ENCODE measurements at regions of chr11 and their contacts with region 1.

Region 1: GRCh38 chr11:7986768-7987559 is at the start of gene EIF3F:
- DNase-seq: peak; percentile 94
- H3K4me3 Mint-ChIP-seq: peak within 1 kb of the TSS; percentile 88
- H3K27ac Mint-ChIP-seq: peak within 1 kb of the TSS; percentile 92
- H3K4me1 Mint-ChIP-seq: peaks cover 37% of the 10 kb centered on the region
- H3K27me3 Mint-ChIP-seq: no peaks in the 10 kb centered on the region
- total RNA-seq, gene EIF3F: 365 to 380 TPM

Region 2: DNA sequence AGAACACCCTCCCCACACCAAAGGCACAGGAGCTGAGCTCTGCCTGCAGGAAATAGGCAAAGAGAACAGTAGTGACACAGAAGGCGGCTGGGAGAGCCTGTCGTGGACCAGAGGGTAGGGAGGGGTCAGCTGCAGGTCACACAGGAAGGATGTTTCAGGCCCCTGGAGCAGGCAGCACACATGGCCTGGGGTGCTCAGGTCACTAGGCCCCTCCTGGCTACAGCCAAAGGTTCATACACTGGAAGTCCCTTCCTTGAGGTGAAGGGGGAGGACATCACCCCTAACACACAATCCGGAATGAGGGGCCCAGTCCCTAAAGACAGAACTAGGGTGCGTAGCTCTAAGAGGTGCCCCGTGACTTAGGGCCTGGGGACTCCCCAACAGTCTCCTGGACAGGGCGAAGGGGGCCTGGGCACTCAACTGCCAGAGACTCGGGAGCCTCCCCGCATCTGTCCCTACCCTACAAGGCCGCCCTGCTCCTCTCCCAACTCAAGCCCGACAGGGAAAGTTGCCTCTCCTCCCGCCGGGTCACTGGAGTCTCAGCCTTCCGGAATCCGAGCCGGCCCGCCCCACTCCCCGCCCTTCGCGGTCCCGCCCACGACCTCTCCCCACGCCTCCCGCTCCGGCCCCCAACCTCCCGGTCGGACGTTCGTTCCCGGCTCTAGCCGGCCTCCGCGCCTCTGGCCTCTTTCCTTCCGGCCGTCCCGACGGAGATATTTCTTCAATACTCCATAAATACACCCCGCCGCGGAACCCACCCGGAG is 313.8 kb before region 1 on chr11 and contains the start of gene CYB5R2:
- CTCF ChIA-PET with region 1: no interaction called
- intact Hi-C with region 1: loop called (anchors 10 kb)
- DNase-seq: peak; percentile 17
- H3K4me3 Mint-ChIP-seq: peak within 1 kb of the TSS; percentile 64
- H3K27ac Mint-ChIP-seq: peak within 1 kb of the TSS; percentile 66
- H3K4me1 Mint-ChIP-seq: peaks cover 49% of the 10 kb centered on the region
- H3K27me3 Mint-ChIP-seq: peaks cover 36% of the 10 kb centered on the region
- total RNA-seq, gene CYB5R2: 5.5 to 8.2 TPM

Region 3: GRCh38 chr11:7775689-7776088 is 211.3 kb before region 1 on chr11:
- CTCF ChIA-PET with region 1: no interaction called
- intact Hi-C with region 1: no loop called
- DNase-seq: no peak
- H3K4me3 Mint-ChIP-seq: no peak overlapping the region
- H3K27ac Mint-ChIP-seq: no peak overlapping the region
- H3K4me1 Mint-ChIP-seq: no peaks in the 10 kb centered on the region
- H3K27me3 Mint-ChIP-seq: peaks cover 13% of the 10 kb centered on the region

Region 4: GRCh38 chr11:7892840-7893254 is 94.1 kb before region 1 on chr11:
- CTCF ChIA-PET with region 1: interaction called, 71 read pairs
- intact Hi-C with region 1: loop called (anchors 1 kb)
- DNase-seq: no peak
- H3K4me3 Mint-ChIP-seq: no peak overlapping the region
- H3K27ac Mint-ChIP-seq: no peak overlapping the region
- H3K4me1 Mint-ChIP-seq: no peaks in the 10 kb centered on the region
- H3K27me3 Mint-ChIP-seq: peaks cover 7% of the 10 kb centered on the region

Region 5: DNA sequence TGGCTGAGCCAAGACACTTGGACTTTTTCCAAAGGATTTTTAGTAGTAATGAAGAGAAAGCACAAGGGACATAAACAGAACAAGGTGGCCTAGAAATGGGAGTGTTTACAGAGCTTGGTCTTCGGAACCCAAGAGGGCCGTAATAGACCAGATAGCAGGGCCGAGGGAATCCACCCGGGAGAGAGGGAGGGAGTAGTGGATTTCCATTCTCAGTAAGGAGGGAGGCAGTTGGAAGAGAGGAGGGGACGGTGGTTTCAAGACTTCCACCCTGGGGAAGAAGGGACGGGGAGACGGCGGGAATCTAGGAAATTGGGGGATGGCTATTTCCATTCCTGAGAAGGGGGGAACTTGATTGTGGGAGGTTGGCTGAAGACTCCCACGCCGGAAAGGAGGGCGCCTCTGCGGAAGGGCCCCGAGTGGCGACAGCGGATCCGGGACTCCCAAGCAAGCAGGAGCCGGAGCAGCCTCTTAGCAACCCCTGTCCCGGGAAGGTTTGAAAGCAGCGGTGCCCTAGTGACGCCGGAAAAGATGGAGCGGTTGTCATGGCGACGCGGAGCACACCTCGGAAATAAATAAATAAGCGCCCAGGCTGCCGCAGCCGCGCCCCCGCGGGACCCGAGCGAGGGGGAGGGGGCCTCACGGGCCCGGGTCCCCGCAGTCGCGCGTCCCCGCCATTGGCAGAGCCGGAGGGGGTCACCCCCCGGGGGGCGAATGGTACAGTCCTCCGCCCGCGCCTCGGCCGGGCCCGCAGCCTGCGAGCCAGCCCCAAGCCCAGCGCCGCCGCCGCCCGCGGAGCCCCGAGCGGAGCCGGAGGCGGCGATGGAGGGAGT is 31.7 kb after region 1 on chr11:
- CTCF ChIA-PET with region 1: interaction called, 4 read pairs
- intact Hi-C with region 1: loop called (anchors 2 kb)
- DNase-seq: peak; percentile 73
- H3K4me3 Mint-ChIP-seq: peak overlapping the region; percentile 48
- H3K27ac Mint-ChIP-seq: no peak overlapping the region
- H3K4me1 Mint-ChIP-seq: peaks cover 12% of the 10 kb centered on the region
- H3K27me3 Mint-ChIP-seq: peaks cover 41% of the 10 kb centered on the region

Region 6: GRCh38 chr11:8328848-8329330 is 341.9 kb after region 1 on chr11:
- CTCF ChIA-PET with region 1: no interaction called
- intact Hi-C with region 1: loop called (anchors 1 kb)
- DNase-seq: peak; percentile 92
- H3K4me3 Mint-ChIP-seq: no peak overlapping the region
- H3K27ac Mint-ChIP-seq: no peak overlapping the region
- H3K4me1 Mint-ChIP-seq: no peaks in the 10 kb centered on the region
- H3K27me3 Mint-ChIP-seq: peaks cover 16% of the 10 kb centered on the region

Region 7: DNA sequence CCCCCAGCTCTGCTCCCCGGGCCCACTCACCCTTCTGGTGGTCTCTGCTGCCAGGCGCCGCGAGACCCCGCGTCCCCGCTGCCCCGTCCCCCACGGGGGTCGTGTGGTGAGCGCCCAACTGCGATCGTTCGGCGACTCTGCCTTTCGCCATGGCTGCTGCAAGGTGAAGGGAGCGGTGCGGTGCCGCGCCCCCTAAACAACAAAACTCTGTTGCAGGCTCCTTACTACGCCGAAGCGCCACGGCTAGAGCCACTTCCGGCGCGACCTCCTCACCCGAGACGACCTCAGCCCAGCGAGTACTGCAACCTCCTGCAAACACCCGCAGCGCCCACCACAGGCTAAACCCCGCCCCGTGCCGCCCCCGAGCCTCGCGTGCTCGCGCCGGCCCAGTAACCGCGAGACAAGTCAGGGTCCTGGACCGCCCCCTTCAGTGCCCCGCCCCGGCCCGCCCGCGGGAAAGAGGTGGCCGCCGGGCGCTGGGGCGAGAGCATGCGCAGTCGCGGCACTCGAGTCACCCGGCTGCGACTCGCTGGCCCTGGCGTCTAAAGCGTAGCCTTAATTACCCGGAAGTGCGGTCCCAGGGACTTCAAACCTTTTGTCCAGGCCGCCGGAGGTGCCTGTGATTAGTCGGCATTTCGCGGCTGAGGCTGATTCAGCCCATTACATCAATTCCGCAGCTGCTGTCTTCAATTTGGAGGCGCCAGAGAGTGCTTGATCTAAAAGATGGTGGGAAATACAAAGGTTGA is 1327.5 kb after region 1 on chr11 and contains the start of gene TMEM41B:
- CTCF ChIA-PET with region 1: no interaction called
- intact Hi-C with region 1: loop called (anchors 5 kb)
- DNase-seq: peak; percentile 99
- H3K4me3 Mint-ChIP-seq: peak within 1 kb of the TSS; percentile 99
- H3K27ac Mint-ChIP-seq: peak within 1 kb of the TSS; percentile 92
- H3K4me1 Mint-ChIP-seq: peaks cover 37% of the 10 kb centered on the region
- H3K27me3 Mint-ChIP-seq: peaks cover 13% of the 10 kb centered on the region
- total RNA-seq, gene TMEM41B: 27.8 to 30.5 TPM

Measured in activated naive CD4-positive, alpha-beta T cell treated with anti-CD3 and anti-CD28 coated beads for 36 hours (primary cell).